Activated CD8-positive, alpha-beta T cell treated with anti-CD3 and anti-CD28 coated beads, Interleukin-2, amount 10 ng/mL, durations not matched to agents 7 days and 5 days (primary cell): ENCODE measurements at regions of chr11 and their contacts with region 1.

Region 1: GRCh38 chr11:122655527-122656072 is at the start of gene UBASH3B:
- DNase-seq: peak; percentile 74
- ATAC-seq: peak; percentile 81
- H3K4me3 Mint-ChIP-seq: peak within 1 kb of the TSS; percentile 98
- H3K27ac Mint-ChIP-seq: peak within 1 kb of the TSS; percentile 92
- H3K4me1 Mint-ChIP-seq: peaks cover 50% of the 10 kb centered on the region
- H3K27me3 Mint-ChIP-seq: peaks cover 13% of the 10 kb centered on the region
- total RNA-seq, gene UBASH3B: 66.6 to 75.0 TPM

Region 2: DNA sequence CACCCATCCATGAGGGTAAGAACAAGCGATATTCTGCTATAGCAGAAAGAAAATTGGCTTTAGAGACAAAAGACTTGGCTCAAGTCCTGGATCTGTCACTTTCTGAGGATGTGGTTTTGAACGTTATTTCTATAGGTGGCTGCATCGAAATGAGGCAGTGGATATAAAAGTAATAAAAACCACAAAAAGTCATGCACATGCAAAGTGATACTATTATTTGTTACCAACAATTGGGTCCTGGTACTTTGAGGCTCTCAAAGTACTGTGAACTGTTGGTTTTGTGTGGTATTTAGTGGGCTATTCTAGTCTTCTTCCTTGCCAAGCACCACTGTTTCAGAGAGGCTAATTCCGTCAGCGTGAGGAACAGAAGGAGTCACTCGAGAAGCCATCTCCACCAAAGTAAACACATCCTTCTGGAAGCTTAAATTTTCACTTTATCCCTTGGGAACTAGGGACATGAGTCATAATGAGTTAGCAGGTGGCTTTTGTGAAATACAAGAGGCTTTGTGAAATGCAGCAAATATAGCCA is 13.0 kb after region 1 on chr11:
- CTCF ChIA-PET with region 1: interaction called, 42 read pairs
- POLR2A ChIA-PET with region 1: interaction called, 24 read pairs
- DNase-seq: peak; percentile 37
- ATAC-seq: peak; percentile 66
- H3K4me3 Mint-ChIP-seq: peak overlapping the region; percentile 35
- H3K27ac Mint-ChIP-seq: peak overlapping the region; percentile 94
- H3K4me1 Mint-ChIP-seq: peaks cover 74% of the 10 kb centered on the region
- H3K27me3 Mint-ChIP-seq: no peaks in the 10 kb centered on the region

Region 3: GRCh38 chr11:122690801-122691548 is 35.4 kb after region 1 on chr11:
- CTCF ChIA-PET with region 1: interaction called, 24 read pairs
- POLR2A ChIA-PET with region 1: interaction called, 26 read pairs
- DNase-seq: peak; percentile 40
- ATAC-seq: peak; percentile 54
- H3K4me3 Mint-ChIP-seq: peak overlapping the region; percentile 73
- H3K27ac Mint-ChIP-seq: peak overlapping the region; percentile 86
- H3K4me1 Mint-ChIP-seq: peaks cover 79% of the 10 kb centered on the region
- H3K27me3 Mint-ChIP-seq: no peaks in the 10 kb centered on the region

Region 4: DNA sequence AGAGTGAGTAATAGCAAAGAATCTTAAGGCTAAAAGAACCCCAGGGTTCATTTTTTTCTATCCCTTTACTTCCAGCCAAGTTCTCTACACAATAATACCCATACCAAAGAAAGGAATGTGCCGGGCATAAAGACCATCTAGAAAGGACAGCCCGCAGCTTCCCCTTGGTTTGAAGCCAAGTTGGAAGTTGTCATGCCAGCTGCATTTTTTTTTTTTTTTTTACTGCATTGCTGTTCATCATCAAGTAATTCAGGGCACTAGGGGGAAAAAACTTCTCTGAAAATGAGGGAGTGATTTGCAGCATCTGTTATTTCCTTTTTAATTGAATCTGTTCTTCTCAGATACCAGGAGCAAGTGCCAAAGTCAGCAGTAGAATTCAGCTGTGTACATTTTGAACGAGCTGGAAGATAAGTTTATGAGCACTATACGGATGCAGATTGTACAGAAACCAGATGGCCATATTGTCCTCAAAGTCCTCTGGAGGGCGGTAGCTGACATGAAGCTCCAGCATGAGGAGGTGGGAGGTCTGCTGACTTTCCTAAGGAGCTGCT is 56.3 kb after region 1 on chr11:
- CTCF ChIA-PET with region 1: interaction called, 10 read pairs
- POLR2A ChIA-PET with region 1: interaction called, 7 read pairs
- DNase-seq: no peak
- ATAC-seq: no peak
- H3K4me3 Mint-ChIP-seq: no peak overlapping the region
- H3K27ac Mint-ChIP-seq: no peak overlapping the region
- H3K4me1 Mint-ChIP-seq: peaks cover 79% of the 10 kb centered on the region
- H3K27me3 Mint-ChIP-seq: no peaks in the 10 kb centered on the region

Region 5: DNA sequence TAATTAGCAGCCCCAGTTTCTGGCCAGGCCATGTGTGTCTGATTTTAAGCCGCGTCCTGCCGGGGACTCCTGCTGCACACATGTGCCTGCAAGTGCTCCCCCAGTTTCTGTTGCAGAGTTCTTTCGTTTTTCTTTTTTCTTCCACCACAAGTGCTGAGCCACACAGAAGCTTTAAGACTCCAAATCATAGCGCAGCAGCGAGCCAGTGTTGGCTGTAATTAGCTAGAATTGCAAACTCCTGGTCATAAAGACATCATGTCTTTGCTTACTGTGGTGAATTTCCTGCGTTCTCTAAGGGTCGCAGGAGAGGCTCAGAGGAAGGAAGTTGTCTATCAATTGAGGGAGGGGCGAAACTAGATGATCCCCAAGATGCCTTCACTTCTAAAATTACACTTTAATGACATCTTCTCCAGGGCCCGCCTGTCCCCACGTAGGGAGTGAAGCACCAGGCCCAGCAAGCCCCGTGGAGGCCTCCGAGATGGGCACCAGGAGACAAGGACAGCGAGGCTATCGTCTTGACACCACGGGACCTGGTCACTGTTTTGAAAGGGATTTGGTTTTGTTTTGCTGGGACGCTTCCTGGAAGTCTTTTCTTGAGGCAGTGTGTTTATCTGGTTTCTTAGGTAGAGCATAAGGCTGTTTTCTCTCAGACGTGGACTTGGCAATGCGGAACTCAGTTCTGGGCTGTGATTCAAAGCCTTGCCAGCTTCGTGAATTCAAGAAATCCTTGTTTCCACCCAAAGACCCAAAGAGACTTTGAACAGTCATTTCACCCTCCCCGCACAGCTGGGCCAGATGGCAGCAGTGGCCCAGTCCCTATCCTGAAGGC is 71.7 kb after region 1 on chr11:
- CTCF ChIA-PET with region 1: interaction called, 17 read pairs
- POLR2A ChIA-PET with region 1: interaction called, 10 read pairs
- DNase-seq: peak; percentile 70
- ATAC-seq: peak; percentile 69
- H3K4me3 Mint-ChIP-seq: peak overlapping the region; percentile 68
- H3K27ac Mint-ChIP-seq: peak overlapping the region; percentile 96
- H3K4me1 Mint-ChIP-seq: peaks cover 73% of the 10 kb centered on the region
- H3K27me3 Mint-ChIP-seq: no peaks in the 10 kb centered on the region

Region 6: GRCh38 chr11:122749005-122749687 is 93.5 kb after region 1 on chr11:
- CTCF ChIA-PET with region 1: interaction called, 183 read pairs
- POLR2A ChIA-PET with region 1: interaction called, 31 read pairs
- DNase-seq: peak; percentile 80
- ATAC-seq: peak; percentile 72
- H3K4me3 Mint-ChIP-seq: peak overlapping the region; percentile 24
- H3K27ac Mint-ChIP-seq: peak overlapping the region; percentile 69
- H3K4me1 Mint-ChIP-seq: peaks cover 39% of the 10 kb centered on the region
- H3K27me3 Mint-ChIP-seq: peaks cover 2% of the 10 kb centered on the region

Region 7: DNA sequence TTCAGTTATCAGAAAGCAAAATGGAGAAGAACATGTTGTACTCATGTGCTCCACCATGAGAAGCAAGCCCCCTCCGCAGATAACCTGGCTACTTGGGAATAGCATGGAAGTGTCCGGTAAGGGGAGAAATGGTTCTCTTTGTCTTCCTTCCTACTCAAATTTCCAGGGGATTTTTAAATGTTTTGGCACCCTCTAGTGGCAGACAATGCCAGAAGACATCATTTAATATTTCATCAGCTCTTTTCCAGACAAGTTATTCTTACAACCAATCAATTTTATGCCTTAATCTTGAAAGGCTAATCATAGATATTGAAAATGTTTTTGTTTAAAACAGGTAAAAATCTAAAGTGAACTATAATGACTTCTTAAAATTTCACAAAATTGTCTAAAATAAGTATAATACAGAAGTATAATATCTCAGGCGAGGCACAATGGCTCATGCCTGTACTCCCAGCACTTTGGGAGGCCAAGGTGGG is 198.4 kb after region 1 on chr11:
- CTCF ChIA-PET with region 1: interaction called, 10 read pairs
- POLR2A ChIA-PET with region 1: no interaction called
- DNase-seq: peak; percentile 75
- ATAC-seq: no peak
- H3K4me3 Mint-ChIP-seq: no peak overlapping the region
- H3K27ac Mint-ChIP-seq: no peak overlapping the region
- H3K4me1 Mint-ChIP-seq: peaks cover 60% of the 10 kb centered on the region
- H3K27me3 Mint-ChIP-seq: no peaks in the 10 kb centered on the region